ENCODE measurements at regions of chr6 and their contacts with region 1.

Region 1: DNA sequence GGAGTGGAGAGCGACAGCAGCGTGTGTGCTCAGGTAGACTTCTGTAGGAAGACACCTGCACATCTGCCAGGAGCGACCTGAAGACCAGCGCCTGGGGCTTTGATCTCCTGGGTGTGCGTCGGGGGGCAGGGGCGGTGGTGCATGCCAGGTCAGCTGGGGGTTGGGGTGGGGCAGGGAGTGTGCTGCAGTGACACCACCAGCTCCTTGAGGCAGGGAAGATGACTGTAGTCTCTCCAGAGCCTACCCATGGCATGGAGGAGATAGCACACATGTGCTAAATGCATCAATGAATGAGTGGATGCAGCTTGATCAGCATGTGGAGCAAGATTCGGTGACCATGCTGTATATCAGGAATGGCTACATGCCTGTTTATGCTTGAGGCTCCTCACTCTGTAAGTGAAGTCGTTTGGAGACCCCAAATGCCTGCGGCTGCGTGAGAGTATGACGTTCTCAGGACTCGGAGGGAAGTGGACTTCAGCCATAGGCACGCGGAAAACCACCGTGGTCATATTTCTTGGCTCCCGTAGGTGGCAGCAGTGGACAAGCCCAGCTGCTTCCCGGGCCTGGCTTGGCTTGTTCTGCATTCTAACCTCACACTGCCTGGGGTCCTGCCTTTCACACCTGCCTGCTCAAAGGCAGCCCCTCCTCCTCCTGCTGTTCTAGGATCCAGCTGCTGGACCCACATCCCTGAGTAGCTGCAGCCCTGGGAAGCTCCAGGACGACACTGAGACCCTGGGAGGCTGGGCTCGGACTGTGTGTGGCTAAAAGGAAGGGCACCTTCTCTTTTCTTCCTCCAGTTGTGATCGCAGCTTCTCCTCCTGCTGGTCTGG is 39.4 kb upstream of the KCNK16 start:
- DNase-seq: no peak
- H3K4me3 ChIP-seq: no peak overlapping the region
- H3K27me3 ChIP-seq: no peaks in the 10 kb centered on the region
- CTCF ChIP-seq: peak; percentile 89

Region 2: GRCh38 chr6:39347906-39348585 is 13.8 kb before region 1 on chr6:
- CTCF ChIA-PET with region 1: interaction called, 22 read pairs
- POLR2A ChIA-PET with region 1: no interaction called
- DNase-seq: no peak
- H3K4me3 ChIP-seq: no peak overlapping the region
- H3K27me3 ChIP-seq: no peaks in the 10 kb centered on the region
- CTCF ChIP-seq: peak; percentile 92

Region 3: DNA sequence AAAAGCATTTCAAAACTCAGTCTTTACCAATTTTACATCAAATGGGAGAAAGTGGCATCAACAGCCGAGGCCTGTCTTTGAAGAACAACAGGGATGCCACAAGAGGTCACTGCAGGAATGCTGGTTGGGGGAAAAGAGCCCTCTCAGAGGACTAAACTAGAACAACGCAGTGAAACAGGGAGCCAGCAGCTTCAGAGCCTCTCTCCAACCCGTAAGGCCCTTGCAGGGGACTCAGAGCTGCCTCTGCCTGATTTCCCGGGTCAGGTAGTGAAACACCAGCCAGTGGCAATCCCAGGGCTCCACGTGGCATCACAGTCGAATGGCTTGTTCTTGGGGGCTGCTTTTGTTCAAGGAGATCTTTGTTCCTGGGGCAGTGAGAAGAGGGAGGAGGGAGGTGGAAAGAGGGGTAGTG is 15.7 kb after region 1 on chr6:
- CTCF ChIA-PET with region 1: interaction called, 20 read pairs
- POLR2A ChIA-PET with region 1: no interaction called
- DNase-seq: no peak
- H3K4me3 ChIP-seq: no peak overlapping the region
- H3K27me3 ChIP-seq: no peaks in the 10 kb centered on the region
- CTCF ChIP-seq: peak; percentile 65

Region 4: GRCh38 chr6:40308533-40309306 is 946.8 kb after region 1 on chr6:
- CTCF ChIA-PET with region 1: interaction called, 30 read pairs
- POLR2A ChIA-PET with region 1: no interaction called
- DNase-seq: no peak
- H3K4me3 ChIP-seq: no peak overlapping the region
- H3K27me3 ChIP-seq: no peaks in the 10 kb centered on the region; the same call in none of the 2 replicates
- CTCF ChIP-seq: peak; percentile 86

Measured in BJ (cell line).